Astrocyte of the cerebellum (primary cell): ENCODE measurements at regions of chr5 and their contacts with region 1.

Region 1: GRCh38 chr5:180548563-180548962 is 42.7 kb downstream of the SCGB3A1 start:
- DNase-seq: no peak
- H3K4me3 ChIP-seq: no peak overlapping the region
- CTCF ChIP-seq: no peak

Region 2: DNA sequence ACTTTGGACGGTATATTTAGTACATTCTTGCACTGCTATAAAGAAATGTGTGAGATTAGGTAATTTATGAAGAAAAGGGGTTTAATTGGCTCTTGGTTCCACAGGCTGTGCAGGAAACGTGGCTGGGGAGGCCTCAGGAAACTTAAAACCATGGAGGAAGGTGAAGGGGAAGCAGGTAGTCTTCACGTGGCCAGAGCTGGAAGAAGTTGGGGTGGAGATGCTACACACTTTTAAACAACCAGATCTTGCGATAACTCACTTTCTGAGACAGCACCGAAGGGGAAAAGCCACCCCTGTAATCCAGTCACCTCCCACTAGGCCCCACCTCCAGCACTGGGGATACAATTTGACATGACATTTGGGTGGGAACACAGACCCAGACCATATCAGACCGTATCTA is 40.9 kb before region 1 on chr5:
- in situ Hi-C with region 1: no loop called
- DNase-seq: no peak
- H3K4me3 ChIP-seq: no peak overlapping the region
- CTCF ChIP-seq: no peak

Region 3: GRCh38 chr5:180580681-180581080 is 32.1 kb after region 1 on chr5:
- in situ Hi-C with region 1: loop called (anchors 5 kb)
- DNase-seq: no peak
- H3K4me3 ChIP-seq: no peak overlapping the region
- CTCF ChIP-seq: no peak

Region 4: GRCh38 chr5:180591311-180591887 is 42.8 kb after region 1 on chr5 and contains the start of gene SCGB3A1:
- in situ Hi-C with region 1: no loop called
- DNase-seq: no peak
- H3K4me3 ChIP-seq: peak within 1 kb of the TSS; percentile 12
- CTCF ChIP-seq: no peak